ENCODE measurements at regions of chr3 and their contacts with region 1.

Region 1: DNA sequence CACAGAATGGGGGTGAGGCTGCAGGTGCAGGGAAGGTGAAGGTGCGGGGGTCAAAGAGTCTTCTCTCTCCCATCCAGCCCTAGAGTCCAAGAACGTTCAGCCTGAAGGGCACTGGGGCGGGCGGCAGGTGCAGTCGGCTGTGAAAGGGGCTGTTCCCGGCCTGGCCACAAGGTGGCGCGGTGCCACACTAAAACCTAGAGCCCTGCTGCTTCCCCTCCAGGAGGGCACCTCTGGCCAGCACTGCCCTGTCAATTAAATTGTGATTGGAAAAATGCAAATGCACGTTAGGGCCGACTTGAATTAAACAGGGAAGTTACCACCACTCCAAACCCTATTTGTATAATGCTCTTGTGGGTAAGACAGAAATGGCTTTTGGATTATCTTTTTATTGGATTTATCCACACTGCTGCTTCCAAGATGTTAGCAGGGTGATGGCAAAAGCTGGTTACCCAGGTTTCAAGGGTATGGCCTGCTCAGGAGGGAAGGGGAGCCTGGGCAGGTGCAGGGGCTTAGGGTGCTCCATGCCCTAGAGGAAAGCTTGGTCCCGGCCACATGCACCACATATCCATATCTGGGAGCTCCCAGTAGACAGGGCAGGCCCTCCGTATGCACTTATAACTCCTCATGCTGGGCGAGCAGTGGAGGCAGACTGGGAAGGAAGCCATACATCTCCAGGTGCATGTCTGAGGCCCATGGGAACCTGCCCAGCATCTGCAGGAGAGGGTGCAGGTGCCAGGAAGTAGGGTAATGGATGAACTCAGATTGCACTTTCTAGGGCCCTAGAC is 119.8 kb downstream of the ADCY5 start:
- DNase-seq: peak; percentile 63
- H3K4me3 ChIP-seq: no peak overlapping the region
- H3K27ac ChIP-seq: no peak overlapping the region
- H3K4me1 ChIP-seq: no peaks in the 10 kb centered on the region
- H3K27me3 ChIP-seq: no peaks in the 10 kb centered on the region
- CTCF ChIP-seq: peak; percentile 97

Region 2: GRCh38 chr3:123489400-123490004 is 160.5 kb after region 1 on chr3:
- CTCF ChIA-PET with region 1: interaction called, 4 read pairs
- POLR2A ChIA-PET with region 1: no interaction called
- intact Hi-C with region 1: loop called (anchors 1 kb)
- DNase-seq: peak; percentile 73
- H3K4me3 ChIP-seq: no peak overlapping the region
- H3K27ac ChIP-seq: no peak overlapping the region
- H3K4me1 ChIP-seq: no peaks in the 10 kb centered on the region
- H3K27me3 ChIP-seq: no peaks in the 10 kb centered on the region
- CTCF ChIP-seq: peak; percentile 95

Region 3: GRCh38 chr3:123559040-123559861 is 230.2 kb after region 1 on chr3:
- CTCF ChIA-PET with region 1: no interaction called
- POLR2A ChIA-PET with region 1: no interaction called
- intact Hi-C with region 1: loop called (anchors 1 kb)
- DNase-seq: peak; percentile 67
- H3K4me3 ChIP-seq: no peak overlapping the region
- H3K27ac ChIP-seq: no peak overlapping the region
- H3K4me1 ChIP-seq: no peaks in the 10 kb centered on the region
- H3K27me3 ChIP-seq: no peaks in the 10 kb centered on the region
- CTCF ChIP-seq: peak; percentile 80

Measured in A673 (cell line).